Kidney (tissue), 22 donors: ENCODE measurements at regions of chr2 and their contacts with region 1.

Region 1: GRCh38 chr2:202184557-202184956 is 53.8 kb downstream of the SUMO1 start:
- DNase-seq: no peak
- H3K4me3 ChIP-seq: no peak overlapping the region
- H3K27ac ChIP-seq: no peak overlapping the region
- H3K4me1 ChIP-seq: peaks cover 0 to 2% (median 0%) of the 10 kb centered on the region in 3 donors
- H3K27me3 ChIP-seq: no peaks in the 10 kb centered on the region
- CTCF ChIP-seq: no peak

Region 2: GRCh38 chr2:201860636-201861066 is 323.9 kb before region 1 on chr2:
- intact Hi-C with region 1: loop called (anchors 5 kb)
- DNase-seq: peak in 4 of 5 donors; percentile 77 to 94 (median 86)
- H3K4me3 ChIP-seq: peak overlapping the region in 2 of 3 donors; percentile 4 to 23
- H3K27ac ChIP-seq: no peak overlapping the region
- H3K4me1 ChIP-seq: peaks cover 0 to 6% (median 2%) of the 10 kb centered on the region in 3 donors
- H3K27me3 ChIP-seq: peaks cover 2% of the 10 kb centered on the region
- CTCF ChIP-seq: peak; percentile 94

Region 3: GRCh38 chr2:202339071-202339870 is 154.7 kb after region 1 on chr2:
- intact Hi-C with region 1: no loop called
- DNase-seq: no peak
- H3K4me3 ChIP-seq: no peak overlapping the region
- H3K27ac ChIP-seq: no peak overlapping the region
- H3K4me1 ChIP-seq: no peaks in the 10 kb centered on the region
- H3K27me3 ChIP-seq: no peaks in the 10 kb centered on the region
- CTCF ChIP-seq: no peak